ENCODE measurements at regions of chr6 and their contacts with region 1.

Region 1: DNA sequence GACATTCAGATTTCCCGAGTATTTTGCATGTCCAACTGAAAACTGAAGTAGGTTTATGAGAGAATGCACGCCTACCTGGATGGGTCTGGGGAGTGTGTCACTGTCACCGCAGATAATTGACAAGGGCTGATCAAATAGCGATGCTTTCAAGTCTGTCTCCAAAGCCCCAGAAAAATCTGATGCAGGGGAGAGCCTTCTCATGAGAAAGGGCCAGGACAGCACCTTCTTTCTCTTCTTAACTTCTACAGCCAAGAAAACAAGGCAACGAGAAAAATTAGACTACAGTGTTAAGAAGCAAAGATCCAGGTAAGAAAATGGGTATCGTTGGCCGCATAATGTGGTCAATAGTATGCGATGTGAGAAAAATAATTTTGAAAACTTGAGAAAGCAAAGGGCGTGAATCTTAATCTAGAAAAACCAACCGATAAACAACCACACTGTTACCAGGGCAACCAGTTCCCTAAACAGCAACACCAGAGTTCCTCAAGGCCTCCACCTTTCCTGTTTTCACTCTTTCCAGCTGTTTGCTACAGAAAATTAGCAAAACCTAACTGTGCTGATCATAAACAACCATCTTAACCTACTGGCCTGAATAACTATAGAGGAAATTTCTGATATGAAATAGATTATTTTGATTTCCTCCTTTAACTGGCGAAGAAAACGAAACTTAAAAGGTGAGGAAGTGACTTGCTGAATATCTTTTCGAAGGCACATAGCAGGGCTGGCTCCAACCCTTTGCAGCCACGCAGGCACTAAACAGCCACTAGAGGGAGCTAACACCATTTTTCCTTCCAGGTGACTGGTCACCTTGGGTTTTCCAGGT is 2.6 kb downstream of the TAGAP start:
- DNase-seq: peak; percentile 74
- H3K4me3 Mint-ChIP-seq: peak overlapping the region; percentile 91
- H3K27ac Mint-ChIP-seq: peak overlapping the region; percentile 90
- H3K4me1 Mint-ChIP-seq: peaks cover 68% of the 10 kb centered on the region
- H3K27me3 Mint-ChIP-seq: no peaks in the 10 kb centered on the region

Region 2: GRCh38 chr6:158468666-158469065 is 573.5 kb before region 1 on chr6:
- intact Hi-C with region 1: no loop called
- DNase-seq: no peak
- H3K4me3 Mint-ChIP-seq: no peak overlapping the region
- H3K27ac Mint-ChIP-seq: no peak overlapping the region
- H3K4me1 Mint-ChIP-seq: no peaks in the 10 kb centered on the region
- H3K27me3 Mint-ChIP-seq: no peaks in the 10 kb centered on the region

Region 3: DNA sequence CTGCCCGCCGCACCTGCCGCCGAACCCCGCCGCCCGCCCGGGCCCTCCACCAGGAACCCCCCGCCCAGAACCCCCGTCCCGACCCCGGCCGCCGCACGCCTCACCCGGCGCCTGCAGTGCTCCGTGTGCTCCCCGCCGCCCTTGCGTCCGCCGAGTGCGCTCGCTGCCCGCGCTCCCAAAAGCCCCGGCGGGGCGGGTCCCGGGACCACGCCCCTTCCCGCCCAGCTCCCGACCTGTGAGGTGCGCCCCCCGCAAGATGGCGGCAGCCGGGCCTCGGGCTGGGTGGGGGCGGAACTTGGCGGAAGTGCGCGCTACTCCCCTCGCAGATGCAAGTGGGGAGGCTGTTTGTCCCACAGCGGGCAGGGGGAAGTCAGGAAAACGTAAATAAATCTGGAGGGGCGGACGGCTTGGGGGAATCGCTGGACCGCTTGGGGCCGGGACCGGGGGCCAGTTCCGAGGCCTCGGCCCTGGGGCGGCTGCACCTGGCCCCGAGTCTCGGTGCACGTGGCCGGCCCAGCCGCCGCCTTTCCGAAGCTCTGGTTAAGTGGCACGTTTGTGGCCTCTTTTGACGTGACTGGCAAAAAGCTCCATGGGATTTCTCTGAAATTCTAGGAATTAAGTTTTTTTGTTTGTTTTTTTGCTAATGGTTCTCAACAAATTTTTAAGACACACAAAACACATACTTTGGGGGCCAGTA is 222.9 kb before region 1 on chr6 and contains the start of gene EZR:
- intact Hi-C with region 1: loop called (anchors 1 kb)
- DNase-seq: peak; percentile 71
- H3K4me3 Mint-ChIP-seq: peak within 1 kb of the TSS; percentile 79
- H3K27ac Mint-ChIP-seq: peak within 1 kb of the TSS; percentile 86
- H3K4me1 Mint-ChIP-seq: peaks cover 55% of the 10 kb centered on the region
- H3K27me3 Mint-ChIP-seq: no peaks in the 10 kb centered on the region
- total RNA-seq, gene EZR: 205 and 206 TPM in 2 replicates

Region 4: GRCh38 chr6:159017757-159018559 is 24.3 kb before region 1 on chr6:
- intact Hi-C with region 1: loop called (anchors 1 kb)
- DNase-seq: no peak
- H3K4me3 Mint-ChIP-seq: peak overlapping the region; percentile 38
- H3K27ac Mint-ChIP-seq: peak overlapping the region; percentile 92
- H3K4me1 Mint-ChIP-seq: peaks cover 29% of the 10 kb centered on the region
- H3K27me3 Mint-ChIP-seq: no peaks in the 10 kb centered on the region

Region 5: GRCh38 chr6:159062564-159062945 is 20.3 kb after region 1 on chr6:
- intact Hi-C with region 1: loop called (anchors 1 kb)
- DNase-seq: peak; percentile 70
- H3K4me3 Mint-ChIP-seq: peak overlapping the region; percentile 67
- H3K27ac Mint-ChIP-seq: peak overlapping the region; percentile 93
- H3K4me1 Mint-ChIP-seq: peaks cover 92% of the 10 kb centered on the region
- H3K27me3 Mint-ChIP-seq: peaks cover 2% of the 10 kb centered on the region

Region 6: GRCh38 chr6:159104163-159104925 is 62.1 kb after region 1 on chr6:
- intact Hi-C with region 1: loop called (anchors 1 kb)
- DNase-seq: peak; percentile 69
- H3K4me3 Mint-ChIP-seq: peak overlapping the region; percentile 67
- H3K27ac Mint-ChIP-seq: peak overlapping the region; percentile 63
- H3K4me1 Mint-ChIP-seq: peaks cover 80% of the 10 kb centered on the region
- H3K27me3 Mint-ChIP-seq: no peaks in the 10 kb centered on the region

Region 7: DNA sequence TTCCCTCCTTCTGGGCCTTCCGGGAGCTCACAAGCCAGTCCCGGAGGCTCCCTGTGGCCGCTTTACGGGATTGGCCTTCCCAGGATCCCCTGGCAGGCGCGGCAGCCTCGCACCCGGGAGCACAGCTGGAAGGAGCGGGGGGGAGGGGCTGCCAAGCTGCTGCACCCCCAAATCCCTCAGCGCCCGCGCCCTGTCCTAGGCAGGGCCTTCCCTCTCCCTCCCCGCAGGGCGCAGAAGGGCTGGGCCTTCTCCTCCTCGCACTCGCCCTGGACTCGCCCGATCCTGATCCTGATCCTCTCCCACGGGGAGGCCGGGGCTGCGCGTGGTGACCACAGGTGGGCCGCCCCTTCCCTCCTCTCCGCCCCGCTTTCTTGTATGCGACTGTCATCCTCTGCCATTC is 273.3 kb after region 1 on chr6:
- intact Hi-C with region 1: no loop called
- DNase-seq: no peak
- H3K4me3 Mint-ChIP-seq: no peak overlapping the region
- H3K27ac Mint-ChIP-seq: no peak overlapping the region
- H3K4me1 Mint-ChIP-seq: no peaks in the 10 kb centered on the region
- H3K27me3 Mint-ChIP-seq: no peaks in the 10 kb centered on the region

Region 8: GRCh38 chr6:159726918-159727716 is 684.9 kb after region 1 on chr6 and contains the start of gene WTAP:
- intact Hi-C with region 1: loop called (anchors 5 kb)
- DNase-seq: peak; percentile 95
- H3K4me3 Mint-ChIP-seq: peak within 1 kb of the TSS; percentile 93
- H3K27ac Mint-ChIP-seq: peak within 1 kb of the TSS; percentile 96
- H3K4me1 Mint-ChIP-seq: peaks cover 41% of the 10 kb centered on the region
- H3K27me3 Mint-ChIP-seq: no peaks in the 10 kb centered on the region
- total RNA-seq, gene WTAP: 125 and 136 TPM in 2 replicates

Measured in activated T-helper 1 cell treated with anti-CD3 and anti-CD28 coated beads, Interleukin-12 subunit alpha, Interleukin-12 subunit beta, Interleukin-2, Interleukin-4 antibody, amounts not matched to agents 30 ng/mL and 10 ng/mL and 1 ng/mL, durations not matched to agents 14 hours and 24 hours and 36 hours (primary cell).